HepG2 (cell line): ENCODE measurements at regions of chr2 and their contacts with region 1.

Region 1: GRCh38 chr2:217943446-217944389 is 59.1 kb downstream of the TNS1 start:
- DNase-seq: peak; percentile 71
- ATAC-seq: peak; percentile 99
- H3K4me3 ChIP-seq: peak overlapping the region; percentile 65 to 92 (median 86)
- H3K27ac ChIP-seq: peak overlapping the region; percentile 16
- H3K4me1 ChIP-seq: peaks cover 68% of the 10 kb centered on the region
- H3K27me3 ChIP-seq: peaks cover 8 to 46% of the 10 kb centered on the region in 2 experiments; a peak in 4 of 5 replicates
- CTCF ChIP-seq: peak; percentile 91
- EP300 ChIP-seq: peak in 1 of 2 experiments; percentile 20; a peak in 2 of 4 replicates
- POLR2A ChIP-seq: peak; percentile 68 to 98
- RAD21 ChIP-seq: peak; percentile 89

Region 2: GRCh38 chr2:217421834-217422233 is 521.9 kb before region 1 on chr2:
- CTCF ChIA-PET with region 1: no interaction called
- POLR2A ChIA-PET with region 1: no interaction called
- in situ Hi-C with region 1: no loop called
- intact Hi-C with region 1: no loop called
- DNase-seq: no peak
- ATAC-seq: no peak
- H3K4me3 ChIP-seq: no peak overlapping the region
- H3K27ac ChIP-seq: no peak overlapping the region
- H3K4me1 ChIP-seq: no peaks in the 10 kb centered on the region
- H3K27me3 ChIP-seq: no peaks in the 10 kb centered on the region; a peak in 1 of 5 replicates
- CTCF ChIP-seq: no peak
- EP300 ChIP-seq: no peak
- POLR2A ChIP-seq: no peak
- RAD21 ChIP-seq: no peak

Region 3: GRCh38 chr2:217625557-217626169 is 318.1 kb before region 1 on chr2:
- CTCF ChIA-PET with region 1: no interaction called
- POLR2A ChIA-PET with region 1: no interaction called
- in situ Hi-C with region 1: no loop called
- intact Hi-C with region 1: no loop called
- DNase-seq: no peak
- ATAC-seq: no peak
- H3K4me3 ChIP-seq: no peak overlapping the region
- H3K27ac ChIP-seq: no peak overlapping the region
- H3K4me1 ChIP-seq: peaks cover 19% of the 10 kb centered on the region
- H3K27me3 ChIP-seq: 0 out of 5 replicates have a peak, but pooled peaks cover 0 to 4% of the 10 kb centered on the region in 2 experiments
- CTCF ChIP-seq: no peak
- EP300 ChIP-seq: no peak
- POLR2A ChIP-seq: no peak
- RAD21 ChIP-seq: no peak

Region 4: GRCh38 chr2:217899231-217900009 is 44.3 kb before region 1 on chr2:
- CTCF ChIA-PET with region 1: no interaction called
- POLR2A ChIA-PET with region 1: interaction called, 8 read pairs
- in situ Hi-C with region 1: no loop called
- intact Hi-C with region 1: loop called (anchors 5 kb)
- DNase-seq: peak; percentile 86
- ATAC-seq: peak; percentile 55
- H3K4me3 ChIP-seq: peak overlapping the region; percentile 48 to 63 (median 62); a peak in 5 of 6 replicates
- H3K27ac ChIP-seq: peak overlapping the region; percentile 89
- H3K4me1 ChIP-seq: peaks cover 69% of the 10 kb centered on the region
- H3K27me3 ChIP-seq: no peaks in the 10 kb centered on the region
- CTCF ChIP-seq: peak; percentile 94
- EP300 ChIP-seq: no peak
- POLR2A ChIP-seq: no peak
- RAD21 ChIP-seq: peak; percentile 80

Region 5: GRCh38 chr2:217954051-217954830 is 10.5 kb after region 1 on chr2:
- CTCF ChIA-PET with region 1: no interaction called
- POLR2A ChIA-PET with region 1: no interaction called
- in situ Hi-C with region 1: no loop called
- intact Hi-C with region 1: no loop called
- DNase-seq: no peak
- ATAC-seq: no peak
- H3K4me3 ChIP-seq: no peak overlapping the region
- H3K27ac ChIP-seq: no peak overlapping the region
- H3K4me1 ChIP-seq: peaks cover 16% of the 10 kb centered on the region
- H3K27me3 ChIP-seq: peaks cover 5 to 72% of the 10 kb centered on the region in 2 experiments; a peak in 4 of 5 replicates
- CTCF ChIP-seq: no peak
- EP300 ChIP-seq: no peak
- POLR2A ChIP-seq: no peak
- RAD21 ChIP-seq: no peak

Region 6: DNA sequence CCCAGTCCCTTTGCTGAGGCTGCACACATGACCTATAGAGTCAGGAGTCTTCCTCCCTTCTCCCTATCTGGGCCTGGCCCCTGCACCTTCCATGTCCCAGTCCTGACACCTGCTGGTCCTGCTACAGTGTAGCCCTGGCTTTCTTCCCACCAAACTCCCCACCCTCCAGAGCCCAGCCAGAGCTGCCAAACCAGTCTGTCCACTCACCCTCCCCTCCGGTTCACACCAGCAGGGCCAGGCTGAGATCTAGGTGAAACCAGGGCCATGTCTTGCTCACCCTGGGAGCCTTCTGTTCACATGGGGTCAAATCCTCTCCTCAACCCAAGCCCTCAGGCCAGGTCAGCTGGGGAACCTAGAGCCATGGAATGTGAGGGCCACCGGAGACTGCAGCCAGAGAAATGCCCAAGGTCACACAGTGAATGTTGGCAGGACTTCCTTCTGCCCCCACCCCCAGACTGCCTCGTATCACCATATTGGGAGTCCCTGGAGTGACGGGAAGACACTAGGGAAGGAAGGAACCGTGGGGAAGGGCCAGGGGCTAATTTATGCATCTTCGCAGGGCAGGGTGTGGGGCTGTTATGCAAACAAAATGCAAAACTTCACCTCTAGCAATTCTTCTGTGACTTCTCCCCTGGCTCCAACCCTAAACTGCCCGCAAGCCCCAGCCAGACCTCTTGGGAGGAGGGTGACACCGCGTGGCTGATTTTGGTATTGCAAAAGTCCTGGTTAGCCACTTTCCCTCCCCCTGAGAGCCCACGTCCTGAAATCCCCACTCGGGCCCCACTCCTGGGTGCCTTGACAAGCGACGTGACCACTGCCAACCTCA is 44.5 kb after region 1 on chr2:
- CTCF ChIA-PET with region 1: no interaction called
- POLR2A ChIA-PET with region 1: no interaction called
- in situ Hi-C with region 1: no loop called
- intact Hi-C with region 1: loop called (anchors 1 kb)
- DNase-seq: peak; percentile 58
- ATAC-seq: peak; percentile 87
- H3K4me3 ChIP-seq: no peak overlapping the region; a peak in 1 of 6 replicates
- H3K27ac ChIP-seq: no peak overlapping the region
- H3K4me1 ChIP-seq: peaks cover 10% of the 10 kb centered on the region
- H3K27me3 ChIP-seq: peaks cover 4 to 16% of the 10 kb centered on the region in 2 experiments; a peak in 2 of 5 replicates
- CTCF ChIP-seq: peak; percentile 96
- EP300 ChIP-seq: no peak
- POLR2A ChIP-seq: no peak
- RAD21 ChIP-seq: peak; percentile 95